ENCODE measurements at regions of chr12 and their contacts with region 1.

Region 1: DNA sequence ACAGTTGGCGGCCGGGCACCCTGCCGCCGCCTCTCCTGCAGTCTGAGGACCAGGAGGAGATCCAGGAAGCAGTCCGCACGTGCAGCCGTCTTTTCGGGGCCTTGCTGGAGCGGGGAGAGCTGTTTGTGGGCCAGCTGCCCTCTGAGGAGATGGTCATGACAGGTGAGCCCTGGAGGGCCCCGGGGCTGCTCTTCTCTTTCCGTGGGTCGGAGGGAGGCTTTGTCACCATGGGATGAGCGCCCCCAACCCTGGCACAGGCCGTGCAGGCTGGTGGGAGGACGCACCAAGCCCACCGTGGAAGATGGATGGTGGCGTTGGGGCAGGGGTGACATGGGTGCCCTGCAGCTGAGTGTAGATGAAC is 536 bp downstream of the NOC4L start:
- DNase-seq: no peak
- ATAC-seq: peak in 2 of 4 donors; percentile 8 to 15
- H3K4me3 ChIP-seq: peak overlapping the region; percentile 96
- H3K27ac ChIP-seq: peak overlapping the region; percentile 89
- H3K4me1 ChIP-seq: peaks cover 17% of the 10 kb centered on the region
- H3K27me3 ChIP-seq: no peaks in the 10 kb centered on the region
- CTCF ChIP-seq: no peak

Region 2: GRCh38 chr12:132189378-132190011 is 44.7 kb after region 1 on chr12:
- intact Hi-C with region 1: loop called in 1 of 2 experiments (anchors 1 kb)
- DNase-seq: peak; percentile 89 to 96
- ATAC-seq: peak; percentile 90 to 98 (median 97)
- H3K4me3 ChIP-seq: peak overlapping the region; percentile 84
- H3K27ac ChIP-seq: peak overlapping the region; percentile 79
- H3K4me1 ChIP-seq: peaks cover 10% of the 10 kb centered on the region
- H3K27me3 ChIP-seq: peaks cover 0 to 11% (median 10%) of the 10 kb centered on the region in 3 donors
- CTCF ChIP-seq: no peak

Measured in psoas muscle (tissue), 8 donors.